Activated B cell treated with CpG ODN at 0.5 μM for 24 hours (primary cell): ENCODE measurements at regions of chr4 and their contacts with region 1.

Region 1: GRCh38 chr4:70687821-70688794 is at the start of gene UTP3:
- DNase-seq: peak; percentile 83
- ATAC-seq: peak; percentile 88
- H3K4me3 Mint-ChIP-seq: peak within 1 kb of the TSS; percentile 99
- H3K27ac Mint-ChIP-seq: peak within 1 kb of the TSS; percentile 100
- H3K4me1 Mint-ChIP-seq: peaks cover 48% of the 10 kb centered on the region
- H3K27me3 Mint-ChIP-seq: no peaks in the 10 kb centered on the region
- CTCF ChIP-seq: peak; percentile 96
- total RNA-seq, gene UTP3: 38.5 and 40.1 TPM in 2 replicates

Region 2: DNA sequence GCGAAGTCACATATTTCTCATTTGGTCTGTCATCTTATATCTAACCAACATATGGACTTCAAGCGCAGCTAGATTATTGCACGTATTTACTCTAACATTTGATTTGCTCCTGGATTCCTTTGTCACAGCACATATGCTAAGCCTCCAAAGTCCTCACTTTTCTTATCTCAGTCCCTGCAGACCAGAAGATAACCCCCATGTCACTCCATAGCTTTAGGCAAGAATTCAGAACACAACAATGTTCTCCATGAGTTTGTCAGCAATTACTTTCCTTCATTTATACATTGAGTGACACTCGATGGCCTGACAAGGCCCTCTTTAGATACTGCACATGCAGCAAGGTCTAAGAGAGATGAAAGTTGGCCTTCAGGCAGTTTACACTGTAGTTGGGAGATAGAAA is 697.1 kb before region 1 on chr4:
- CTCF ChIA-PET with region 1: no interaction called
- POLR2A ChIA-PET with region 1: no interaction called
- intact Hi-C with region 1: no loop called
- DNase-seq: no peak
- ATAC-seq: no peak
- H3K4me3 Mint-ChIP-seq: no peak overlapping the region
- H3K27ac Mint-ChIP-seq: no peak overlapping the region
- H3K4me1 Mint-ChIP-seq: no peaks in the 10 kb centered on the region
- H3K27me3 Mint-ChIP-seq: no peaks in the 10 kb centered on the region
- CTCF ChIP-seq: no peak

Region 3: DNA sequence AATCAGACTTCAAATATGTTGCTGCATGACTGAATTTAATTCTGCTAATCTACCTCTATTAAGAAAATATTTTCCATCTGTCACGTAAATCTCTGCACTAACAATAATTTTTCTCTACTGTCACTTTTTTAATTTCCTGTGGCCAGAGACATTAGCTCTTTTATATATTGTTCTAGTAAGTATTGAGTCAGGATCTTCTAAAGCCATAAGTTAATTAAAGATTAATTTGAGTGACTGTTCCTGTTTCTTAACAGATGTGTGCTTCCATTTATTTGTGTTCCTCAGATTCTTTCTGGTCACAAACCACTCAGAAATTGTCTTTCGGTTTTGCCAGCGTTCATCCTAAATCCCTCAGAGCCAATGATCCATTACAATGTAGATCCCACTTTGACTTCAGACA is 307.5 kb before region 1 on chr4:
- CTCF ChIA-PET with region 1: no interaction called
- POLR2A ChIA-PET with region 1: no interaction called
- intact Hi-C with region 1: no loop called
- DNase-seq: no peak
- ATAC-seq: no peak
- H3K4me3 Mint-ChIP-seq: no peak overlapping the region
- H3K27ac Mint-ChIP-seq: no peak overlapping the region
- H3K4me1 Mint-ChIP-seq: no peaks in the 10 kb centered on the region
- H3K27me3 Mint-ChIP-seq: no peaks in the 10 kb centered on the region
- CTCF ChIP-seq: no peak

Region 4: GRCh38 chr4:70624226-70624793 is 63.8 kb before region 1 on chr4:
- CTCF ChIA-PET with region 1: no interaction called
- POLR2A ChIA-PET with region 1: no interaction called
- intact Hi-C with region 1: no loop called
- DNase-seq: no peak
- ATAC-seq: no peak
- H3K4me3 Mint-ChIP-seq: no peak overlapping the region
- H3K27ac Mint-ChIP-seq: no peak overlapping the region
- H3K4me1 Mint-ChIP-seq: no peaks in the 10 kb centered on the region
- H3K27me3 Mint-ChIP-seq: no peaks in the 10 kb centered on the region
- CTCF ChIP-seq: no peak

Region 5: GRCh38 chr4:70714079-70714887 is 26.2 kb after region 1 on chr4:
- CTCF ChIA-PET with region 1: no interaction called
- POLR2A ChIA-PET with region 1: interaction called, 5 read pairs
- intact Hi-C with region 1: loop called (anchors 1 kb)
- DNase-seq: no peak
- ATAC-seq: peak; percentile 29
- H3K4me3 Mint-ChIP-seq: peak overlapping the region; percentile 69
- H3K27ac Mint-ChIP-seq: peak overlapping the region; percentile 94
- H3K4me1 Mint-ChIP-seq: peaks cover 60% of the 10 kb centered on the region
- H3K27me3 Mint-ChIP-seq: no peaks in the 10 kb centered on the region
- CTCF ChIP-seq: no peak